ENCODE measurements at regions of chr2 and their contacts with region 1.

Region 1: DNA sequence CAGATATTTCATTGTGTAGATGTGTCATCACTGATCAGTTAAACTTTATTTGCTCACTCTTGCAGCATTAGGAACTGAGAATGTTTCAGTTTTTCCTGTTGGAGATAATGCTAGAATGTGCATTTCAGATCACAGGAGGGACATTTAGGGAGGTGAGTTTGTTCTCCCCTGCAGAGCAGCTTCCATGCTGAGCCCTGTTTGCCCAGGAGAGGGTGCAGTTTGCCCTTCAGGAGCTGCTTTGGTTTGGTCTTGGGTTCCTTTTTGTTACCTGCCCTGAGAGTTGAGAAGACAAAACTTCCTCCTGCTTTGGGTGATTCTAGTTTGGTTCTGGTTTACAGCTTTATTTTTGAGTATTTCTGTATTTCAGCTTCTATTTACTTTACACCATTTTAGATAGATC is 49.9 kb downstream of the DGKD start:
- DNase-seq: no peak
- ATAC-seq: peak; percentile 92
- H3K4me3 Mint-ChIP-seq: no peak overlapping the region
- H3K27ac Mint-ChIP-seq: peak overlapping the region; percentile 82
- H3K4me1 Mint-ChIP-seq: peaks cover 57% of the 10 kb centered on the region
- H3K27me3 Mint-ChIP-seq: no peaks in the 10 kb centered on the region
- CTCF ChIP-seq: no peak

Region 2: GRCh38 chr2:233426619-233427342 is 22.6 kb after region 1 on chr2:
- CTCF ChIA-PET with region 1: interaction called, 28 read pairs
- POLR2A ChIA-PET with region 1: interaction called, 9 read pairs
- intact Hi-C with region 1: loop called (anchors 1 kb)
- DNase-seq: no peak
- ATAC-seq: no peak
- H3K4me3 Mint-ChIP-seq: no peak overlapping the region
- H3K27ac Mint-ChIP-seq: peak overlapping the region; percentile 84
- H3K4me1 Mint-ChIP-seq: peaks cover 75% of the 10 kb centered on the region
- H3K27me3 Mint-ChIP-seq: no peaks in the 10 kb centered on the region
- CTCF ChIP-seq: no peak

Region 3: DNA sequence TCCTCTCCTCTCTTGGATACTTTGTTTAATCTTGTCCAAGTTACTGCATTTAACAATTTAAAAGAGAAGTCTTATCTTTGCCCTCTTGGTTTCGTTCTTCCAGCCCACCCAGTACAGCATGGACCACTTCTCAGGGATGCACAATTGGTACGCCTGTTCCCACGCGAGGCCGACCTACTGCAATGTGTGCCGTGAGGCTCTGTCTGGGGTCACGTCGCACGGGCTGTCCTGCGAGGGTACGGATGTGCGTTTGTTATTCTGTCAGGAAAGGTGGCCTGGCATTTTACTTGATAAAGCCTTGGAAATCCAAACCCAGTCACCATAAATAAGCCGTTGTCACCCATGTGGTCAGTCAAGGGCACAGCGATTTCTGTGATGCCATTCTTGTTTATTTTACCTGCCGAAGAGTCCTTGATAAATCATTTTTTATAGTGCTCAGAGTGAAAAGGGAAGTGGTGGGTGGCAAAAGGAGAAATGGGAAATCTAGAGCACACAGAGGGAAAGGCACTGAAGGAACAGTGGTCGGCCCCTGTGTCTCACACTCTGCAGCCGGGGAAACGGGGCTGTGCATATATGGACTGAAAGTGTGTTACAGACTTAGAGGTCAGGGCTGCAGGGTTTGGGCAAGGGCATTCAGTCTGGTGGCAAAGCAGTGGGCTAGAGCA is 30.6 kb after region 1 on chr2:
- CTCF ChIA-PET with region 1: interaction called, 12 read pairs
- POLR2A ChIA-PET with region 1: interaction called, 4 read pairs
- intact Hi-C with region 1: no loop called
- DNase-seq: peak; percentile 10
- ATAC-seq: no peak
- H3K4me3 Mint-ChIP-seq: peak overlapping the region; percentile 8
- H3K27ac Mint-ChIP-seq: peak overlapping the region; percentile 54
- H3K4me1 Mint-ChIP-seq: peaks cover 36% of the 10 kb centered on the region
- H3K27me3 Mint-ChIP-seq: no peaks in the 10 kb centered on the region
- CTCF ChIP-seq: no peak

Region 4: DNA sequence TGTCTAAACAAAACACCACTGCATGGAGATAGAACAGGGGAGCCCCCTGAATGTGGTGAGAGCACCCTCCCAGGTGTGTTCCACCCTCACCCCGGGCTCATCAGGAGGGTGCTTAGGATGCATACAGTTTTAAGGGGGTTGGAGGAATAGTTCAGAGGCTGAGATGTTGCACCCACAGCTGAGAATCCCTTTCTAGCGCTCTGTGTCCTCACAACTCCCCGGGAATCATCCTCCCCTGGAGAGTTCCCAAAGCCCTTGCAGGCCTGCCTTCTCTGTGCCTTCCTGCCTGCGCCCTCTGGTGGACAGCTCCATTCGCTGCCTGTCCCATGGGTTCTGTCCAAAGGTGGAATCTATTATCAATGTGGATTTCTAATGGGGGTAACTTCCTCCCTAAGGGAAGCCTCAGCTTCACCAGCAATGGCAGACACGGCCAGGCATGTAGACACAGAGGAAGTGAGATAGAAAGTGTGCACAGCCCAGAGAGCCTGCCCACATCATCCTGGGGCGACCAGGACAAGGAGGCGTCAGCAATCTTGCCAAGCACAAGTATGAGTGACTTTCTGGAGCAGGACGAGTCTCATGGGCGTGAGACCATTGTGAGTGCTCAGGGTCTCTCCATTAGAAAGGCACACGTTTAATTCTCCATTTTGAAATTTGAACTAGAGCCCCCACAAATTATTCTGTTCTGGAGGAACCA is 307.2 kb after region 1 on chr2:
- CTCF ChIA-PET with region 1: interaction called, 8 read pairs
- POLR2A ChIA-PET with region 1: no interaction called
- intact Hi-C with region 1: loop called (anchors 1 kb)
- DNase-seq: peak; percentile 55
- ATAC-seq: peak; percentile 66
- H3K4me3 Mint-ChIP-seq: no peak overlapping the region
- H3K27ac Mint-ChIP-seq: no peak overlapping the region
- H3K4me1 Mint-ChIP-seq: peaks cover 4% of the 10 kb centered on the region
- H3K27me3 Mint-ChIP-seq: peaks cover 32% of the 10 kb centered on the region
- CTCF ChIP-seq: peak; percentile 75

Measured in activated B cell treated with CpG ODN at 0.5 μM for 24 hours (primary cell).